CD8-positive, alpha-beta T cell (primary cell): ENCODE measurements at regions of chr13 and their contacts with region 1.

Region 1: DNA sequence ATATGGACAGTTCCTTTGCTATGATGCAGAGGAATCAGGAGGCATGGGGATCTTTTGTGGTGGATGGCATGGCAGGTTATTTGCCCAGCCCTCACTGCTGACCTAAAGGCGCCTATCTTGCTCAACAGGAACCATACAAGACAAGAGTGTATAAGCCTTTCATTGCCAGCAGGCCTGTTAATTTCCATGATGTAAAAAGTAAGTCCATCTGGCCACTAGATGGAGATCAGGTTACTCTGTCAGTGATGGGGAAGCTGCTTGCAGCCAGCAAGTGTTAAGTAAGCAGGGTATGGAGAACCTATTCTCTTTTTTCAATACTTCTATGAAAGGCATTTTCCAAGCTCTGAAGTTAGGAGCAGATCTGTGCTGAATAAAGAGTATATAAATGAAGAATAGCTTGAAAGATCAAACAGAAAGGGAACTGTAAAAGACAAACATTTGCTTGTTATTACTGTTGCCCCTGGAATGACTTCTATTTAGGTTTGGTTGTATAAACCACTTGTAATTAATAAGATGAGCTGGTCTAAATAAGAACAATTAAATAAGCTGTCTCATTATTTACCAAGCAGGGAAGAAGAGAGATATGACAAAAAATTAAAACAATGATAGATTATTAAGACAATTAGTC is 210.9 kb downstream of the RGCC start:
- DNase-seq: peak in 5 of 9 experiments; percentile 17 to 74 (median 20)
- ATAC-seq: peak; percentile 51
- H3K4me3 ChIP-seq: no peak overlapping the region
- H3K4me3 Mint-ChIP-seq: no peak overlapping the region
- H3K27ac ChIP-seq: no peak overlapping the region
- H3K27ac Mint-ChIP-seq: no peak overlapping the region
- H3K4me1 ChIP-seq: no peaks in the 10 kb centered on the region
- H3K4me1 Mint-ChIP-seq: peaks cover 3% of the 10 kb centered on the region
- H3K27me3 ChIP-seq: no peaks in the 10 kb centered on the region
- H3K27me3 Mint-ChIP-seq: no peaks in the 10 kb centered on the region
- CTCF ChIP-seq: peak; percentile 73

Region 2: DNA sequence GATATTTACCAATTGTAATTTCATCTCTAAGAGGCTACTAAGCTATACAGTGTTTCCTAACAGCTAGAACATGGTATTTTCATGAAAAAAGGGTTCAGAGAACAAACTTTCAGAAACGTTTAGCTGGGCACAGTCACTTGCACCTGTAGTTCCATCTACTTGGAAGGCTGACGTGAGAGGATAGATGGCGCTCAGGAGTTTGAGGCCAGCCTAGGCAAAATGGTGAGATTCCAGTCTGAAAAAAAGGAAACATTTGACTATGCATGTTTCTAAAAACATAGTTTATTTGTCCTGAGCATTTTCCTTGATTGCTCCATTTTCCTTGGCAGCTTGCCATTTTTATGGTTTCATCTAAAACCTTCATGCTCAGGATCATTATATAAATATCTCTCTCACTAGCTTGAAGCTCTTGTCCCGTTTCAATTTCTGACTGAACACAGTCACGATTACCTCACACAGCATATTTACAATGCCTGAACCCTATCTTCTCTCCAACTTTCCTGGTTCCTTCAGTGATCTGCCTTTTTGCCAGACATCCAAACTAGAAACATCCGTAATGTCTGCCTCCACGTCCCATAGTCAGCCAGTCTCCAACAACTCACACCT is 10.1 kb before region 1 on chr13:
- CTCF ChIA-PET with region 1: interaction called, 21 read pairs
- POLR2A ChIA-PET with region 1: no interaction called
- intact Hi-C with region 1: no loop called
- DNase-seq: no peak
- ATAC-seq: no peak
- H3K4me3 ChIP-seq: no peak overlapping the region
- H3K4me3 Mint-ChIP-seq: no peak overlapping the region
- H3K27ac ChIP-seq: no peak overlapping the region
- H3K27ac Mint-ChIP-seq: no peak overlapping the region
- H3K4me1 ChIP-seq: no peaks in the 10 kb centered on the region
- H3K4me1 Mint-ChIP-seq: peaks cover 4% of the 10 kb centered on the region
- H3K27me3 ChIP-seq: no peaks in the 10 kb centered on the region
- H3K27me3 Mint-ChIP-seq: no peaks in the 10 kb centered on the region
- CTCF ChIP-seq: no peak

Region 3: GRCh38 chr13:41678249-41678648 is 10.0 kb after region 1 on chr13:
- CTCF ChIA-PET with region 1: interaction called, 16 read pairs
- POLR2A ChIA-PET with region 1: no interaction called
- intact Hi-C with region 1: no loop called
- DNase-seq: no peak
- ATAC-seq: no peak
- H3K4me3 ChIP-seq: no peak overlapping the region
- H3K4me3 Mint-ChIP-seq: no peak overlapping the region
- H3K27ac ChIP-seq: no peak overlapping the region
- H3K27ac Mint-ChIP-seq: no peak overlapping the region
- H3K4me1 ChIP-seq: peaks cover 8% of the 10 kb centered on the region
- H3K4me1 Mint-ChIP-seq: peaks cover 18% of the 10 kb centered on the region
- H3K27me3 ChIP-seq: no peaks in the 10 kb centered on the region
- H3K27me3 Mint-ChIP-seq: no peaks in the 10 kb centered on the region
- CTCF ChIP-seq: no peak

Region 4: DNA sequence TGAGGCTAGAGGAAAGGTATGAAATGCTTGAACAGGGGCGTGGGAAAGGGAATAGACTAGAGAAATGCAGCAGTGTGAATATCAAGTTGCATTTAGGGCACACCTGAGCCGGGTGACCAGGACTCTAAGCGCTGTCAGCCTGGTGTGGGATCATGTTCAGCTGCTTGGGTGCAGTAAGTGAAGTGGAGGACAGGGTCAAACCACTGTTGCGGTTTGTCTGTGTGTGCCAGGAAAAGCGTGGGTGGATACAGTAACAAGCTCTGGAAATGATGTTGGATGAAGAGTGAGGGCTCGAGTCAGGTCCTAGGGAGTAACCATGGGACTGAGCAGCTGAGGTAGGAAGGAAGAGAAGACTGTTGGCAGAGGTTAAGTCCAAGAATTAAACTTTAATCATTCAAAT is 396.0 kb after region 1 on chr13:
- CTCF ChIA-PET with region 1: no interaction called
- POLR2A ChIA-PET with region 1: no interaction called
- intact Hi-C with region 1: no loop called
- DNase-seq: no peak
- ATAC-seq: no peak
- H3K4me3 ChIP-seq: no peak overlapping the region
- H3K4me3 Mint-ChIP-seq: no peak overlapping the region
- H3K27ac ChIP-seq: no peak overlapping the region
- H3K27ac Mint-ChIP-seq: no peak overlapping the region
- H3K4me1 ChIP-seq: no peaks in the 10 kb centered on the region
- H3K4me1 Mint-ChIP-seq: no peaks in the 10 kb centered on the region
- H3K27me3 ChIP-seq: no peaks in the 10 kb centered on the region
- H3K27me3 Mint-ChIP-seq: no peaks in the 10 kb centered on the region
- CTCF ChIP-seq: no peak

Region 5: GRCh38 chr13:42215578-42216421 is 547.6 kb after region 1 on chr13:
- CTCF ChIA-PET with region 1: interaction called, 3 read pairs
- POLR2A ChIA-PET with region 1: no interaction called
- intact Hi-C with region 1: loop called (anchors 2 to 5 kb)
- DNase-seq: peak in 2 of 9 experiments; percentile 15 to 36
- ATAC-seq: no peak
- H3K4me3 ChIP-seq: no peak overlapping the region
- H3K4me3 Mint-ChIP-seq: no peak overlapping the region
- H3K27ac ChIP-seq: no peak overlapping the region
- H3K27ac Mint-ChIP-seq: no peak overlapping the region
- H3K4me1 ChIP-seq: no peaks in the 10 kb centered on the region
- H3K4me1 Mint-ChIP-seq: no peaks in the 10 kb centered on the region
- H3K27me3 ChIP-seq: no peaks in the 10 kb centered on the region
- H3K27me3 Mint-ChIP-seq: no peaks in the 10 kb centered on the region
- CTCF ChIP-seq: peak; percentile 40